Activated naive CD4-positive, alpha-beta T cell treated with anti-CD3 and anti-CD28 coated beads for 36 hours (primary cell): ENCODE measurements at regions of chr11 and their contacts with region 1.

Region 1: GRCh38 chr11:120229451-120230424 is 10.2 kb upstream of the POU2F3 start:
- DNase-seq: peak; percentile 59
- H3K4me3 Mint-ChIP-seq: no peak overlapping the region
- H3K27ac Mint-ChIP-seq: no peak overlapping the region
- H3K4me1 Mint-ChIP-seq: no peaks in the 10 kb centered on the region
- H3K27me3 Mint-ChIP-seq: peaks cover 8% of the 10 kb centered on the region

Region 2: DNA sequence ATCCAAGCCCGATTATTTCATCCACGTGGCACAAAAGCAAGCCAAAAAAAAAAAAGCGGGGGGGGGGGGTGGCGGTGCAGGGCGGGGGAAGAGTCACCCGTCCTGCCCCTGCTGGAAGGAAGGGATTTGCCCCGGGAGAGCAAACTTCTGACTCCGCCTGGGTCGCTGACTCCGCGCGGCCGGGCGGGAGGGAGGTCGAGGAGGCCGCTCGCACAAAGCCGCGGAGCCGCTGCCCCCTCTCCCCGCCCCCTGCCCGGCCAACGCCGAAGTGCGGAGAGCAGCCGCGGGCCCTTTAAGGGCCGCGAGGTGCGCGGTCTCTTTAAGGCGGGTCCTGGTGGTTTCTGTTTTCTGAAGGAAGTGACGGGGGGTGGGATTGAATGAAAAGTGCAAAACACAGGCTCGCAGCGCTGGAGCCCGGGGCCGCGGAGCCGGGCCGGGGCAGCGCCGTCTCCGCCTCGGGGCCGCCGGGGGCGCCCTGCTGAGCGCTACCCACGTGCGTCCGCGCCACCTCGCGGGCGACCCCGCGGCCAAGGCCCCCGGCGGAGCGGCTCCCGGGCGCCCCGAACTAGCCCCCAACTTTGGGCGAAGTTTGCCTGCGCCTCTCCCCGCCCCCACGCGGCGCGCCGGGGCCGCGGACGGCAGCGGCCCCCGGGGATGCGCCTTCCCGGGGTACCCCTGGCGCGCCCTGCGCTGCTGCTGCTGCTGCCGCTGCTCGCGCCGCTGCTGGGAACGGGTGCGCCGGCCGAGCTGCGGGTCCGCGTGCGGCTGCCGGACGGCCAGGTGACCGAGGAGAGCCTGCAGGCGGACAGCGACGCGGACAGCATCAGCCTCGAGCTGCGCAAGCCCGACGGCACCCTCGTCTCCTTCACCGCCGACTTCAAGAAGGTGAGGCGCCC is 18.9 kb before region 1 on chr11 and contains the start of gene OAF:
- CTCF ChIA-PET with region 1: interaction called, 12 read pairs
- intact Hi-C with region 1: no loop called
- DNase-seq: peak; percentile 59
- H3K4me3 Mint-ChIP-seq: peak within 1 kb of the TSS; percentile 83
- H3K27ac Mint-ChIP-seq: peak within 1 kb of the TSS; percentile 44
- H3K4me1 Mint-ChIP-seq: peaks cover 5% of the 10 kb centered on the region
- H3K27me3 Mint-ChIP-seq: peaks cover 10% of the 10 kb centered on the region
- total RNA-seq, gene OAF: 1.5 to 1.6 TPM

Region 3: DNA sequence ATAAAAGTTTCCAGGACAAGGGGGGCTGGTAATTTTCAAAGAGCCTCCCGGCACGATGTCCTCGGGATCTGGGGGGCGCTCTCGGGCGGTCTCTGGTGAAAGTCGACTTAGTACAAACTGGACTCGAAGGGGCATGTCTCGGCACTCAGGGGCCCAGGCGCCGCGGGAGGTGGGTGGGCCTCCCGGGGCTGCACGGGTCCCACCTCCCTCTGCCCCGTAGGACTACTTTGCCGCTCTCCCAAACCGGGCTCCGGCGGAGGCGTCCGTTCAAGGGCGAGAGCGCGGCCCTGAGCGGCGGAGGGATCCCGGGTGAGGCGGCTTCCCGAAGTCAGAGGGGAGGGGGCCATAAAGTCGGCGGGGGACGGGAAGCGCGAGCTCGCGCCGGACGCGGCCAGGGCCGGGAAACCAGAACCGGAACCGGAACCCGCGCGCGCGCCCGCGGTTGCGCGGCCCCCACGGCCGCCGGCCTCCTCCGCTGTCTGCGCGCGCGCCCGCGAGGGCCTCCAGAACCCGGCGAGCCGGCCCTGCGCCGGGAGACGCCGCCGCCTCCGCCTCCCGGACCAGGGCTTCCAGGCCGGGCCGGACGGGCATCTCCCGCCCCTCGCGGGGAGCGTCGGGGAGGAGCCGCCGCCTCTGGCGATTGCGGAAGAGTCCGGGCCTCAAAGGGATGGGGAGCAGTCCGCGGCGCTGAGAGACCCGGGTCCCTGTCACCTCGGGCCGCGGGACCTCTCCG is 106.3 kb after region 1 on chr11 and contains the start of gene ARHGEF12:
- CTCF ChIA-PET with region 1: no interaction called
- intact Hi-C with region 1: no loop called
- DNase-seq: peak; percentile 87
- H3K4me3 Mint-ChIP-seq: peak within 1 kb of the TSS; percentile 87
- H3K27ac Mint-ChIP-seq: peak within 1 kb of the TSS; percentile 57
- H3K4me1 Mint-ChIP-seq: peaks cover 34% of the 10 kb centered on the region
- H3K27me3 Mint-ChIP-seq: peaks cover 50% of the 10 kb centered on the region
- total RNA-seq, gene ARHGEF12: 15.4 to 16.5 TPM